ENCODE measurements at regions of chr11 and their contacts with region 1.

Region 1: GRCh38 chr11:3203221-3204043 is 15.2 kb downstream of the MRGPRG start:
- DNase-seq: no peak
- H3K4me3 ChIP-seq: no peak overlapping the region
- H3K27ac ChIP-seq: no peak overlapping the region
- H3K4me1 ChIP-seq: peaks cover 0 to 13% (median 7%) of the 10 kb centered on the region in 4 donors
- H3K27me3 ChIP-seq: peaks cover 51% of the 10 kb centered on the region
- CTCF ChIP-seq: no peak
- EP300 ChIP-seq: no peak
- POLR2A ChIP-seq: no peak

Region 2: DNA sequence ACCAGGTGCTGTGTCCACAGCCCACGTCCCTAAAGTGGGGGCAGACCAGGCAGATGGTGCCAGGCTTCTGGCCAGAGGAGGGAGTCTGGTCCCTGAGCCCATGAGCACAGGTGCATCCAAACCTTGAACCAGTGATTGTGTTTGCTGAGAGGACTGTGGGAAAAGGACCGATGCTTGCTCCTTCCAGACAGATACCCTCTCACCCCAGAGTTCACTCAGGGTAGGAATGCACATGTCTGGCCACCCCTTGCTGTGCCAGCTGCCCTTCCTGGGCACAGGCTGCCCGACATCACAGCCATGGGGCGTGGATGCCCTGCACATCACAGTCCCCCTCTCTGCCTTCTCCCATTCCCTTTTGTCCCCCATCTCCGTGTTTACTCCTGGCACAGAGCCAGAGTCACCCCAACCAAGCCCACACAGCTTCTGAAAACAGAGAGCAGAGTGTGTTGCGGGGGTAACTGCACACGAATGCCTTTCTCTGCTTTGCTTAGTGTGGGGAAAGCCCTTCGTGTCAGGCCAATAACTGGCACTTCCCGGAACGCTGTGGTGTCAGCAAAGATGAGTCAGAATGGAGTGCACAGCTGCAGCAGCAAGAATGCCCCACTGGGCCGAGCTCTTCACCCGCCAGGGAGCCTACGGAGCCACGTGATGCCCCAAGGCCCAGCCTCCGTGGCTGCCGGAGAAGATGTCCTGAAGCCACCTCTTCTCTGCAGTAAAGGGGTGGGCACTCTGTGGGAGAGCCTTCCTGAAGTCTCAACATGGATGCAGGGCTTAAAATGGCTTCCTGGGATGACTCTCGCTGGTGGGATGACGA is 153.8 kb before region 1 on chr11:
- in situ Hi-C with region 1: loop called in 1 of 4 experiments (anchors 25 kb)
- intact Hi-C with region 1: no loop called
- DNase-seq: peak; percentile 80
- H3K4me3 ChIP-seq: no peak overlapping the region
- H3K27ac ChIP-seq: peak overlapping the region; percentile 64 to 83 (median 71)
- H3K4me1 ChIP-seq: peaks cover 13 to 28% (median 20%) of the 10 kb centered on the region in 4 donors
- H3K27me3 ChIP-seq: no peaks in the 10 kb centered on the region
- CTCF ChIP-seq: no peak
- EP300 ChIP-seq: peak; percentile 6
- POLR2A ChIP-seq: no peak

Region 3: GRCh38 chr11:3109921-3110706 is 93.3 kb before region 1 on chr11:
- in situ Hi-C with region 1: loop called in 1 of 4 experiments (anchors 25 kb)
- intact Hi-C with region 1: no loop called
- DNase-seq: peak; percentile 45
- H3K4me3 ChIP-seq: no peak overlapping the region
- H3K27ac ChIP-seq: no peak overlapping the region
- H3K4me1 ChIP-seq: peaks cover 0 to 4% (median 0%) of the 10 kb centered on the region in 4 donors
- H3K27me3 ChIP-seq: no peaks in the 10 kb centered on the region
- CTCF ChIP-seq: peak; percentile 67 to 82 (median 71)
- EP300 ChIP-seq: no peak
- POLR2A ChIP-seq: no peak

Measured in transverse colon (tissue), 4 donors.